Activated T-helper 1 cell treated with anti-CD3 and anti-CD28 coated beads, Interleukin-12 subunit alpha, Interleukin-12 subunit beta, Interleukin-2, Interleukin-4 antibody, amounts not matched to agents 30 ng/mL and 10 ng/mL and 1 ng/mL, durations not matched to agents 14 hours and 24 hours and 36 hours (primary cell): ENCODE measurements at regions of chr6 and their contacts with region 1.

Region 1: DNA sequence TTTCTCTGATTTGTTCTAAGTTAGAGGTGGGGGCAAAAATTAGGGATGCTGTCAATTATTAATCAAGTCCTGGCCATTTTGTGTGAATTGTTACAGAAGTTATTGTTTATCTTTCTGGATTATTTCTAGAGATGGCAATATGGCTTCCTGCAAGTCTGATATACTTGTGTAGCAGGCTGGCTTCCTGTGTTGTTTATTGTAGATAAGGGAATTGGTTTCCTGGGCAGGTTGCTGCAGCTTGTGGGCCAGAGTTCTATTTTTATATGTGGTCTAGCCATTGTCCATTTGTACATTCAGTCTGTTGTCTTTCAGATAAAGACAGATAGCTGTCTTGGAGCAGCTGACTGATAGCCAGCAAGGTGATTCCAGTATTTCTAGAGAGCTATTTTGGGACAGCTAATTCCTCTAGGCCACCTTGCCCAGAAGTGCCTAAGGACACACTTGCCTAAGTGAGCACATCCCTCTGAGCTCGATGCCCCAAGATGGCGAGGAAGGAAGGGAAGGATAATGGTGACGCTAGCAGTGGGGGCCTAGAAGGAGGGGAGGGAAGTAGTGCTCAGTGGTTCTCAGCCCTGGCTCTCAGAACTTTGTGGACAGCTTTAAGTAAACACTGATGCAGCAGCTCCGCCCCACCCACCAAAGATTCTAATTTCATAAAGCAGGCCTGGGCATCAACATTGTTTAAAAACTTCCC is 25.5 kb downstream of the DDO start:
- DNase-seq: no peak
- H3K4me3 Mint-ChIP-seq: no peak overlapping the region
- H3K27ac Mint-ChIP-seq: no peak overlapping the region
- H3K4me1 Mint-ChIP-seq: peaks cover 10% of the 10 kb centered on the region
- H3K27me3 Mint-ChIP-seq: no peaks in the 10 kb centered on the region

Region 2: DNA sequence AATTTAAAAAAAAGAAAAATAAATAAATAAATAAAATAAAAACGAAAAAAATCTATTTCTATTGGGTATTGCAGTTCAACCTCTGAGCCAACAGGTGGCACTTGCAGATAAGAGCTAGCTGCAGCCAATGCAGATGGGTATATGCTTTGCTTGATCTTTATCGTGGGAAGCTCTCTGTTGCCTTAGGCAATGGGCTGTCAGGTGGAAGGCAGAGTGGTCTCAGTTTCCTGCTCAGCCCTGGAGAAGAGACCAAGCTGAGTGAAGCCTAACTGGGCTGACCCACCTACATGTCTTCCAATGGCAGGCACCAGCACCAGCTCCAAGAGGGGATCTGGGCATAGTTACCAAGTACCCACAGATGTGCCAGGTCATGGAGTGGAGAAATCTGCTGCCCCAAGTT is 793.8 kb before region 1 on chr6:
- intact Hi-C with region 1: loop called (anchors 2 kb)
- DNase-seq: no peak
- H3K4me3 Mint-ChIP-seq: no peak overlapping the region
- H3K27ac Mint-ChIP-seq: no peak overlapping the region
- H3K4me1 Mint-ChIP-seq: no peaks in the 10 kb centered on the region
- H3K27me3 Mint-ChIP-seq: no peaks in the 10 kb centered on the region